ENCODE measurements at regions of chr22 and their contacts with region 1.

Region 1: GRCh38 chr22:40289991-40290459 is 56.3 kb upstream of the ADSL start:
- DNase-seq: peak; percentile 90
- H3K4me3 Mint-ChIP-seq: peak overlapping the region; percentile 79
- H3K27ac Mint-ChIP-seq: peak overlapping the region; percentile 93
- H3K4me1 Mint-ChIP-seq: peaks cover 43% of the 10 kb centered on the region
- H3K27me3 Mint-ChIP-seq: no peaks in the 10 kb centered on the region

Region 2: DNA sequence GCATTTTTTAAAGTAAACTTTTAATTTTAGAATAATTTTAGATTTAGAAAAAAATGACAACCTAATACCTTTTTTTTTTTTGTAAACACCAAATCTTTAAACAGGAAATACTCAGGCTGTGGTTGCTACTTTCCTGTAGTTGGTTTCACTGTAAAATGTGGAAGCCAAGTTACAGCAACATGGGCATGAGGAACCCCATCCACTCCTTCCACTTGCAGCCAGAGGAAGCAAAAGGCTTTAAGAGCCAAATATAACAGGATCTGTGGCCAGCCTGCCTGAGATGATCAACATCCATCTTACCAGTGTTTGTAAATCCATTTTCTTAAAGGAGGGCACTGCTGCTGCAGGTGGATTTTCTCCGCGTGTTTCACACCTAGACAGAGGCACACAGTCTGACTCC is 46.1 kb before region 1 on chr22:
- intact Hi-C with region 1: loop called (anchors 5 kb)
- DNase-seq: peak; percentile 72
- H3K4me3 Mint-ChIP-seq: peak overlapping the region; percentile 60
- H3K27ac Mint-ChIP-seq: peak overlapping the region; percentile 42
- H3K4me1 Mint-ChIP-seq: peaks cover 57% of the 10 kb centered on the region
- H3K27me3 Mint-ChIP-seq: no peaks in the 10 kb centered on the region

Region 3: DNA sequence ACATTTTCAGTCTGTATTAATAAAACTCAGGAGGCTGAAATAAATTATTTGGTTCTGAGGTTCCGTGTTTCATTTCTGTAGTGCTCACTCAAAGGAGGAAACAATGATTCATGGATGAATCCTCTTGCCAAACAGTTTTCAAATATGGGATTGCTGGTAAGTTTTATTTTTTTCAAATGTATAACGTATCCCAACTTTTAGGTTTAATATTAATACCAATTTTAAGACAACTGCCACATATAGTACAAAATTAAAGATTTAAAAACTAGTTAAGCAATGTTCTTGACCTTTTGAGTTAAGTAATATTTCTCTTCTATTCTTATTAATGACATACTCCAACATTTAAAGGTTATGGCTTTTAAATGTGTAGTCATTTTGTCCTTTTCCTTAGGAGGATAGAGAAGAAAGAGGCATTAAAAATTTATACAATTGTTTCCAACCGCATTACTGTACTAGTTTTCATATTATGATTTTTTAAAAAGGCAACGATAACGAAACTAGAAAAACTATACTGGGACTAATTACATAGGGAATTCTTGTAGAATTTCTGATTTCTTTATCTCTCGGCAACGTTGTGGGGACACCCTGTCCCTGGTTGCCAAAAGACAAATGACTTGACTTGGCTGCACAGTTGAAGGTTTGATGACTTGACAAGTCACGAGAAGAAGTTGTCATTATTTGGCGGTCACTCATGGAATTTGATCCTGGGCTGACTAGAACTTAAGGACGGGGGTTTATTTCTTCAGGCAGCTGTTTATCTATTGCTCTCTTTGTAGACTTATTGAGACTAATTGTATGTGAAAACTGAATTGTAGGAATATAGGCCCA is 12.8 kb before region 1 on chr22:
- intact Hi-C with region 1: loop called (anchors 1 kb)
- DNase-seq: no peak
- H3K4me3 Mint-ChIP-seq: no peak overlapping the region
- H3K27ac Mint-ChIP-seq: peak overlapping the region; percentile 9
- H3K4me1 Mint-ChIP-seq: peaks cover 25% of the 10 kb centered on the region
- H3K27me3 Mint-ChIP-seq: no peaks in the 10 kb centered on the region